ENCODE measurements at regions of chr1 and their contacts with region 1.

Region 1: DNA sequence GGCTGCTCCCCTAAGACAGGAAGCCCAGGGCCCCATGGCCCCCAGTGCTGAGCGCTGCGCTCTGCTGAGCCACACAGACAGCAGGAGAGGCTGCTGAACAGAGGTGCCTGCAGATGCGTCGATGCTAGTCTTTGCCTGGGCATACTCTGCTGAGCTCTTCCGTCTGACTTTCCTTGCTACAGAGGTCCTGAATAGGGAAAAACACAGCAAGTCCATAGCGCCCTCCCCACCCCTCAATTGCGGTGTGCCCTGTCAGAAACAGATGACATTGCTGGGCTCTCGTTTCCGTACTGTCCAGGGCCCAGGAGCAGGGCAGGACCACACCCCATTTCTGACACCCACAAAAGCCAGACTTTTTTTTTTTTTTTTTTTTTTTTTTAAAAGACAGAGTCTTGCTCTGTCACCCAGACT is 252.5 kb downstream of the SDCCAG8 start:
- DNase-seq: peak; percentile 60 to 73
- ATAC-seq: peak; percentile 91 to 96 (median 96)
- H3K4me3 ChIP-seq: no peak overlapping the region
- H3K4me3 Mint-ChIP-seq: peak overlapping the region; percentile 83
- H3K27ac ChIP-seq: peak overlapping the region; percentile 76
- H3K27ac Mint-ChIP-seq: peak overlapping the region; percentile 86 to 90
- H3K4me1 ChIP-seq: peaks cover 40% of the 10 kb centered on the region
- H3K4me1 Mint-ChIP-seq: peaks cover 64 to 74% of the 10 kb centered on the region in 2 donors
- H3K27me3 ChIP-seq: no peaks in the 10 kb centered on the region
- H3K27me3 Mint-ChIP-seq: no peaks in the 10 kb centered on the region
- CTCF ChIP-seq: no peak

Region 2: DNA sequence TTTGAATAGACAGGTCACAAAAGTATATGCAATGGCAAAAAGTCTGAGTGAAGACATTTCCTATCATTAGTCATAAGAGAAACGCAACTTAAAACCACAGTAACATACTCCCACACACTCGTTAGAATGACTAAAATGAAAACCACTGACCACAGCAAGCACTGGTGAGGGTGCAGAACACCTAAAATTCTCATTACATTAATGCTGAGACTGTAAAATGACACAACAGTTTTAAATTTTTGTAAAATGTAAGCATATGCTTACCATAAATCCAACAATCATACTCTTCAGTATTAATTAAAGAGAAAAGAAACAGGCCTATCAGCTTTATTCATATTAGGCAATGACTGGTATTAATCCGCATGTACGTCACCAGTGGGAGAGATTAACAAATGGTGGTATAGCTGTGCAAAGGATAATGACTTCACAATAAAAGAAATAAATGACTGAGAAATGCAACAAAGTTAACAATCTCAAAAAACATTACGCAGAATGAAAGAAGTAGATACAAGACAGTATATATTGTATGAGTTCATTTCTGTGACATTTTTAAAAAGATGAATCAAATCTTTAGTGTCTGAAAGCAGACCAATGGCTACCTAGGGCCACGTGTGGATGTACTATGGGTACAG is 88.2 kb after region 1 on chr1:
- intact Hi-C with region 1: loop called (anchors 1 kb)
- DNase-seq: peak in 1 of 2 donors; percentile 66
- ATAC-seq: peak; percentile 78 to 93 (median 86)
- H3K4me3 ChIP-seq: no peak overlapping the region
- H3K4me3 Mint-ChIP-seq: peak overlapping the region; percentile 67
- H3K27ac ChIP-seq: peak overlapping the region; percentile 80
- H3K27ac Mint-ChIP-seq: peak overlapping the region; percentile 84 to 90
- H3K4me1 ChIP-seq: peaks cover 4% of the 10 kb centered on the region
- H3K4me1 Mint-ChIP-seq: peaks cover 26 to 31% of the 10 kb centered on the region in 2 donors
- H3K27me3 ChIP-seq: no peaks in the 10 kb centered on the region
- H3K27me3 Mint-ChIP-seq: no peaks in the 10 kb centered on the region
- CTCF ChIP-seq: no peak

Region 3: DNA sequence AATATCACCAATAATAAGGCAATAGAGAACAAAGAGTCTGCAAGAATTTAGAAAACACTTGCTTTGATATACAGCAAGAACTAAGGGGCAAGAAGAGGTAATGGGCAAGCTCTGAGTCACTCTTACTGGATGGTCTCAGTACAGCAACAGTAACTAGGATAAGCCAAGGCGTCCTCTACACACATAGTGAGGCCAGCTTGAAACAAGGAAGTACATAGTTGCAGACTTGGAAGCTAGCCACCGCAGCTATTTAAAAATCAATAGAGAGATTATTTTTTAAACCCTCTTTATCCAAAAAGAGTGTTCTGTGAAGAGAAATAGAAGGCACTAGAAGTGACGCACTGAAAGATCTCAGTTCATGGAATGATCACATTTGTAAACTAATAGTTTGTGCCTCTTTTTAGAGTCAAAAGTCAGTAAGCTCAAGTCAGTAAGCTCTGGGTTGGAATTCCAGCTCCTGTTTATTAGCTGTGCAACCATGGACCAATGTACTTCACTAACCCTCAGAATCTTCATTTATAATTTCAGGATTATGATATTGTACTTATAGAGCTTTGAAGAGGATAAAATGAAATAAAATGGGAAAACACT is 223.1 kb after region 1 on chr1:
- intact Hi-C with region 1: no loop called
- DNase-seq: no peak
- ATAC-seq: peak in 2 of 3 donors; percentile 38 to 54
- H3K4me3 ChIP-seq: no peak overlapping the region
- H3K4me3 Mint-ChIP-seq: no peak overlapping the region
- H3K27ac ChIP-seq: no peak overlapping the region
- H3K27ac Mint-ChIP-seq: peak overlapping the region in 1 of 2 donors; percentile 10
- H3K4me1 ChIP-seq: peaks cover 23% of the 10 kb centered on the region
- H3K4me1 Mint-ChIP-seq: peaks cover 50 to 72% of the 10 kb centered on the region in 2 donors
- H3K27me3 ChIP-seq: no peaks in the 10 kb centered on the region
- H3K27me3 Mint-ChIP-seq: no peaks in the 10 kb centered on the region
- CTCF ChIP-seq: no peak